Activated CD4-positive, alpha-beta T cell treated with anti-CD3 and anti-CD28 coated beads for 36 hours (primary cell): ENCODE measurements at regions of chr1 and their contacts with region 1.

Region 1: DNA sequence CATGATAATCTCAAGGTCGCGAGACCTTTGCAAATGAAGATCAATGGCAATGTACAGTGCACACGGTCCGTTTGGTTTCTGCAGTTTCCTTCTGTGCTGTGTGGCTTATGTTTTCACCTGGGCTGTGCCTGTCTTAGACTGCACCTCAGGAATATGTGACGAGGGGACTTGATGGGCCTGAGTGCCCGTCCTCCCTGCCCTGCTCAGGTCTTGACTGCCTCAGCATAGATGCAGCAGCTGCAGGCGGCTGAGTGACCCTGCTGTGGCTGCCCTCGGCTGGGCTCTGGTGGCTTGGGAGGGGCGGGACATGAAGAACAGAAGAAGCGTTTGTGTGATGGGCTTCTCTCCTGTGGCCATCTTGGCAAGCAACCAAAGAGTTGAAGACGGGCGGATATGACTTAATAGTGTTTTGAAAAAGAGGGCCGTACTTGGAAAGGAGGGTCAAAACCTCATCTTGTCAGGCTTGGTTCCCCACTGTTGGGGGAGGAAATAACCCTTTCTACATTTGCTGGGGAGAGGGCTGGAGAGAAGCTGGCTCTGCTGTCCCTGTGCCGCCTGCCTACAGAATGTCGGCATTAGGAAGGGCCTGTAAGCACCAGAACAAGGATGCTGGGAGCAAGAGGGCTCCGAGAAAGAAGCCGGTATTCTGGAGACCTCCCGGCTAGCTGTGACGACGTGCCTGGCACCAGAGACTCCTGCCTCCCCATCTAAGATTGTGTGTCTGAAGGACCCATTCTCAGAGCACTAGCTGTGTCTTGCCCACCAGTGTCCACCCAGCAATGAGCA is 7.1 kb downstream of the MYBPHL start:
- DNase-seq: no peak
- ATAC-seq: no peak
- H3K4me3 Mint-ChIP-seq: no peak overlapping the region
- H3K27ac Mint-ChIP-seq: no peak overlapping the region
- H3K4me1 Mint-ChIP-seq: no peaks in the 10 kb centered on the region
- H3K27me3 Mint-ChIP-seq: peaks cover 8% of the 10 kb centered on the region

Region 2: DNA sequence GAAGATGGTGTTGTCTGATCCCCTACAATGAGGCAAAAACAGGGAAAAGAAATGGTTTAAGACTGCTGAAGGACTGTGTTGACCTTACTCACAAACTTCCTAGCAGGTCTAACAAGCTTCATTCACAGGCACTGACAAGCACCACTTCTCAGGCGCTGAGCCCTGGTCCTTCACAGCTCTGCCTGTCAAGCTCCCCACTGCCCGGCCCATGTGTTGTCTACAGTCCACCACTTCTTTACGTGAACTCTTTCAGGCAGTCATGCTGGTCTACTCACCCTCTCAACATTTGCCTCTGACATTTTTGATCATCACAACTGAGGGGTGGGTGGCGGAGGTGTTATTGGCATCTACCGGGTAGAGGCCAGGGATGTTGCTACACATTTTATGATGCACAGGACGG is 47.8 kb after region 1 on chr1:
- CTCF ChIA-PET with region 1: no interaction called
- POLR2A ChIA-PET with region 1: no interaction called
- intact Hi-C with region 1: no loop called
- DNase-seq: no peak
- ATAC-seq: no peak
- H3K4me3 Mint-ChIP-seq: no peak overlapping the region
- H3K27ac Mint-ChIP-seq: no peak overlapping the region
- H3K4me1 Mint-ChIP-seq: no peaks in the 10 kb centered on the region
- H3K27me3 Mint-ChIP-seq: no peaks in the 10 kb centered on the region

Region 3: DNA sequence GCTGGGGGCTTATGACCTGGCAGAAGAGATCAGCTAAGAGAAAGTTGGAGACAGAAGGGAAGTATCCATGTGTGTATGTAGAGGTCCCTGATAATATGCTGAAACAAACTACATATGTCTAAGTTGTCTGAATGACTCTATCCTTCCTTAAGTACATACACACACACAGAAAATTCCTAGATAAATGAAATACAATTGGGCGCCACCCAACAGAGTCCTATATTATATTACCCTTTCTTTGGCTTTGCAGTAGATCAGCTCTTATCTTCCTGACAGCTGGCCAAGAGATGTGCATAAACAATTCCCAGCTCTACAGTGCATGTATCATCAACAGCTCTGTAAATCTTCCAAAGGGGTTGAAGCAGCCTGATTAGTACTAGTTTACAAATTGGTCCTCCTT is 57.9 kb after region 1 on chr1:
- CTCF ChIA-PET with region 1: no interaction called
- POLR2A ChIA-PET with region 1: no interaction called
- intact Hi-C with region 1: loop called in 1 of 2 experiments (anchors 5 kb)
- DNase-seq: no peak
- ATAC-seq: no peak
- H3K4me3 Mint-ChIP-seq: no peak overlapping the region
- H3K27ac Mint-ChIP-seq: no peak overlapping the region
- H3K4me1 Mint-ChIP-seq: no peaks in the 10 kb centered on the region
- H3K27me3 Mint-ChIP-seq: peaks cover 4% of the 10 kb centered on the region

Region 4: GRCh38 chr1:109579491-109579890 is 279.7 kb after region 1 on chr1:
- CTCF ChIA-PET with region 1: no interaction called
- POLR2A ChIA-PET with region 1: no interaction called
- intact Hi-C with region 1: no loop called
- DNase-seq: no peak
- ATAC-seq: no peak
- H3K4me3 Mint-ChIP-seq: no peak overlapping the region
- H3K27ac Mint-ChIP-seq: no peak overlapping the region
- H3K4me1 Mint-ChIP-seq: peaks cover 3% of the 10 kb centered on the region
- H3K27me3 Mint-ChIP-seq: no peaks in the 10 kb centered on the region